Activated B cell treated with CpG ODN at 0.5 μM for 24 hours (primary cell): ENCODE measurements at regions of chr1 and their contacts with region 1.

Region 1: GRCh38 chr1:36420836-36421664 is 23.3 kb upstream of the LSM10 start:
- DNase-seq: peak; percentile 85
- ATAC-seq: peak; percentile 100
- H3K4me3 Mint-ChIP-seq: peak overlapping the region; percentile 20
- H3K27ac Mint-ChIP-seq: peak overlapping the region; percentile 56
- H3K4me1 Mint-ChIP-seq: peaks cover 7% of the 10 kb centered on the region
- H3K27me3 Mint-ChIP-seq: no peaks in the 10 kb centered on the region
- CTCF ChIP-seq: peak; percentile 44

Region 2: GRCh38 chr1:36099681-36100341 is 321.2 kb before region 1 on chr1:
- CTCF ChIA-PET with region 1: interaction called, 4 read pairs
- POLR2A ChIA-PET with region 1: no interaction called
- intact Hi-C with region 1: loop called (anchors 1 kb)
- DNase-seq: peak; percentile 67
- ATAC-seq: peak; percentile 86
- H3K4me3 Mint-ChIP-seq: no peak overlapping the region
- H3K27ac Mint-ChIP-seq: no peak overlapping the region
- H3K4me1 Mint-ChIP-seq: peaks cover 3% of the 10 kb centered on the region
- H3K27me3 Mint-ChIP-seq: no peaks in the 10 kb centered on the region
- CTCF ChIP-seq: no peak

Region 3: GRCh38 chr1:36285448-36286101 is 135.5 kb before region 1 on chr1:
- CTCF ChIA-PET with region 1: interaction called, 5 read pairs
- POLR2A ChIA-PET with region 1: no interaction called
- intact Hi-C with region 1: loop called (anchors 1 kb)
- DNase-seq: no peak
- ATAC-seq: peak; percentile 92
- H3K4me3 Mint-ChIP-seq: no peak overlapping the region
- H3K27ac Mint-ChIP-seq: peak overlapping the region; percentile 59
- H3K4me1 Mint-ChIP-seq: peaks cover 11% of the 10 kb centered on the region
- H3K27me3 Mint-ChIP-seq: no peaks in the 10 kb centered on the region
- CTCF ChIP-seq: no peak

Region 4: GRCh38 chr1:36342481-36343478 is 78.3 kb before region 1 on chr1:
- CTCF ChIA-PET with region 1: interaction called, 48 read pairs
- POLR2A ChIA-PET with region 1: interaction called, 3 read pairs
- intact Hi-C with region 1: loop called (anchors 1 kb)
- DNase-seq: peak; percentile 47
- ATAC-seq: peak; percentile 89
- H3K4me3 Mint-ChIP-seq: no peak overlapping the region
- H3K27ac Mint-ChIP-seq: peak overlapping the region; percentile 50
- H3K4me1 Mint-ChIP-seq: peaks cover 3% of the 10 kb centered on the region
- H3K27me3 Mint-ChIP-seq: no peaks in the 10 kb centered on the region
- CTCF ChIP-seq: no peak

Region 5: GRCh38 chr1:36369061-36369861 is 51.8 kb before region 1 on chr1:
- CTCF ChIA-PET with region 1: interaction called, 4 read pairs
- POLR2A ChIA-PET with region 1: no interaction called
- intact Hi-C with region 1: loop called (anchors 1 kb)
- DNase-seq: peak; percentile 77
- ATAC-seq: peak; percentile 64
- H3K4me3 Mint-ChIP-seq: peak overlapping the region; percentile 28
- H3K27ac Mint-ChIP-seq: peak overlapping the region; percentile 93
- H3K4me1 Mint-ChIP-seq: peaks cover 84% of the 10 kb centered on the region
- H3K27me3 Mint-ChIP-seq: no peaks in the 10 kb centered on the region
- CTCF ChIP-seq: no peak

Region 6: GRCh38 chr1:36458654-36459309 is 37.7 kb after region 1 on chr1:
- CTCF ChIA-PET with region 1: no interaction called
- POLR2A ChIA-PET with region 1: no interaction called
- intact Hi-C with region 1: no loop called
- DNase-seq: no peak
- ATAC-seq: peak; percentile 65
- H3K4me3 Mint-ChIP-seq: no peak overlapping the region
- H3K27ac Mint-ChIP-seq: no peak overlapping the region
- H3K4me1 Mint-ChIP-seq: peaks cover 23% of the 10 kb centered on the region
- H3K27me3 Mint-ChIP-seq: no peaks in the 10 kb centered on the region
- CTCF ChIP-seq: no peak